B cell (primary cell): ENCODE measurements at regions of chr7 and their contacts with region 1.

Region 1: GRCh38 chr7:107078517-107078966 is 34.0 kb downstream of the PRKAR2B start:
- DNase-seq: no peak
- ATAC-seq: no peak
- H3K4me3 ChIP-seq: no peak overlapping the region
- H3K4me3 Mint-ChIP-seq: no peak overlapping the region
- H3K27ac ChIP-seq: no peak overlapping the region
- H3K27ac Mint-ChIP-seq: no peak overlapping the region
- H3K4me1 ChIP-seq: no peaks in the 10 kb centered on the region
- H3K4me1 Mint-ChIP-seq: no peaks in the 10 kb centered on the region
- H3K27me3 ChIP-seq: no peaks in the 10 kb centered on the region
- H3K27me3 Mint-ChIP-seq: no peaks in the 10 kb centered on the region
- CTCF ChIP-seq: no peak

Region 2: GRCh38 chr7:107035446-107035845 is 43.1 kb before region 1 on chr7:
- CTCF ChIA-PET with region 1: no interaction called
- POLR2A ChIA-PET with region 1: no interaction called
- intact Hi-C with region 1: no loop called
- DNase-seq: no peak
- ATAC-seq: no peak
- H3K4me3 ChIP-seq: no peak overlapping the region
- H3K4me3 Mint-ChIP-seq: no peak overlapping the region
- H3K27ac ChIP-seq: no peak overlapping the region
- H3K27ac Mint-ChIP-seq: no peak overlapping the region
- H3K4me1 ChIP-seq: no peaks in the 10 kb centered on the region
- H3K4me1 Mint-ChIP-seq: no peaks in the 10 kb centered on the region
- H3K27me3 ChIP-seq: no peaks in the 10 kb centered on the region
- H3K27me3 Mint-ChIP-seq: no peaks in the 10 kb centered on the region
- CTCF ChIP-seq: no peak

Region 3: DNA sequence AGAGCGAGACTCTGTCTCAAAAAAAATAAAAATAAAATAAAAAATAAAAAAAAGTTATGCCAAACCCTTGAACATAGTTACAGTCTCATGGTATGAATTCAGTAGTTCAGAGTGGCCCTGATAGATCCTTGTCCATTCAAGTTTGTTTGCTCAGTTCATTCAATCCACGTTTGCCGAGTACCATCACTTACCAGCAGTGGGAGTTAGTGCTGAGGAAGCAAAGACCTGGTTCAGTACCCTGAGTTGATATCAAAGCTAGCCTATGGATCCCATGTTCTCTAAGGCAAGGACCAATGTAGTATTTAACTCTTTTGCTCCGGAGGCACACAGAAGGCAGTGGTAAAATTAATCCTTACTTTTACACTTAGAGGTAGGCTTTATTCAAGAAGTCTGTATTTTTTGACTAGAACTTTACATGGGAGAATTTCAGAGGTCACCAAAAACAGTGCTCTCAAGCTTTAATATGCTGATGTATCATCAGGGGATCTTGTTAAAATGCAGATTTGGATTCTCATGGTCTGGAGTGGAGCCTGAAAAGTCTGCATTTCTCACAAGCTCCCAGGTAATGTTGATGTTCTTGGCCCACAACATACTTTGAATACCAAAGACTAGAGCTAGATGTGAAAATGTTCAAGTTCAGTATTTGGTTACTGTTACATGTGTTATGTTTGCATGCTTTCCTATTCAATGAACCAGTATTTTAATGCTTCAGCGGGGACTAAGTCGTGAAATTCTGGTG is 52.1 kb after region 1 on chr7:
- CTCF ChIA-PET with region 1: no interaction called
- POLR2A ChIA-PET with region 1: interaction called, 10 read pairs
- intact Hi-C with region 1: no loop called
- DNase-seq: no peak
- ATAC-seq: no peak
- H3K4me3 ChIP-seq: no peak overlapping the region
- H3K4me3 Mint-ChIP-seq: no peak overlapping the region
- H3K27ac ChIP-seq: no peak overlapping the region
- H3K27ac Mint-ChIP-seq: no peak overlapping the region
- H3K4me1 ChIP-seq: peaks cover 9 to 15% of the 10 kb centered on the region in 2 donors
- H3K4me1 Mint-ChIP-seq: peaks cover 9% of the 10 kb centered on the region
- H3K27me3 ChIP-seq: no peaks in the 10 kb centered on the region
- H3K27me3 Mint-ChIP-seq: no peaks in the 10 kb centered on the region
- CTCF ChIP-seq: no peak